ENCODE measurements at regions of chr17 and their contacts with region 1.

Region 1: DNA sequence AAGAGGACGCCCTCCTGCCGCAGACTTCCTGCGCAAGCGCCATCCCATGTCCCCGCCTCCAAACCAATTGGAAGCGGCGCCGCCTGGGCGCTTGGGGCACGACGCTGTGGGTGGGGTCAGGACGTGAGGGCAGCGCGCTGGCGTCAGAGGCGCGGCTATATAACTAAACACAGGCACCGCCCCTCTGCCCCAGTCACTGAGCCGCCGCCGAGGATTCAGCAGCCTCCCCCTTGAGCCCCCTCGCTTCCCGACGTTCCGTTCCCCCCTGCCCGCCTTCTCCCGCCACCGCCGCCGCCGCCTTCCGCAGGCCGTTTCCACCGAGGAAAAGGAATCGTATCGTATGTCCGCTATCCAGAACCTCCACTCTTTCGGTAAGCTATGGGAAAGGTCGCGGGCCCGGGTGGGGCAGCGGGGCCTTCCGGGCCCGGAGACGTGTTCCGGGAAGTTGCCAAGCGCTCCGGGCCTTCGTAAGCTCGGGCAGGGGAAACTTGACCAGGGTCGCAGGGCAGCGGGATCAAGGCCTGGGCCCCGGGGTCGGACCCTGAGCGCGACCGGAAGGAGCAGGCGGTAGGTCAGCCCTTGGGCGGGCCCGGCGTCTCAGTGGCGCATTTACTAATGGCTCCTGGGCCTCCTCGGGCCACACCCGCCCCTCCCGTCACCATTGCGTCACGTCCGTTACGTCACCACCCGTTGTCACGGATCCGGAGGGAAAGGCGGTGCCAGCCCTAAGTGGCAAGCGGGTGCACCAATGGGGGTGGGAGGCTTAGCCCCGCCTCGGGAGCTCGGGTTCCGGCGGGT is at the start of gene EIF1:
- DNase-seq: peak; percentile 100
- ATAC-seq: peak; percentile 85 to 87
- H3K4me3 ChIP-seq: peak within 1 kb of the TSS; percentile 94 to 100 (median 96)
- H3K27ac ChIP-seq: peak within 1 kb of the TSS; percentile 99 to 100 (median 100)
- H3K4me1 ChIP-seq: peaks cover 28 to 30% of the 10 kb centered on the region in 2 donors
- H3K27me3 ChIP-seq: no peaks in the 10 kb centered on the region
- CTCF ChIP-seq: no peak
- POLR2A ChIP-seq: peak; percentile 100
- total RNA-seq, gene EIF1: 222 to 842 (median 375) TPM

Region 2: DNA sequence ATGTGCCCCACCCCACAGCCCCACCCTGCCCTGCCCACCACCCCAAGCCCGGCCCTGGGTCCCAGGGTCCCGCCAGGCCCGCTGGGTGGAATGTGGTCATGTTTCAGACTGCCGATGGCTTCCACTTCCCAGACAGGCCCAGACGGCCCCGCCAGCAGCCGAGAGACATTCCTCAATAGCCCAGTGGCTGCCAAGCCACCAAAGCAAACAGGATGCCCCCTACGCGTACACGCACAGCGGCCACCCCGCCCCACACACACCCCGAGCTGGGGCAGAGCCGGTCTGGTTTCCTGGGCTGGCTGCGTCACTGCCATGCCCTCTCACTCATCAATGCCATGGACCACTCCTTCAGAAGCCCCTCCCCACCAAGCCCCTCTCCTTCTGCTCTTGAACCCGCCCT is 63.3 kb before region 1 on chr17:
- in situ Hi-C with region 1: no loop called
- intact Hi-C with region 1: no loop called
- DNase-seq: no peak
- ATAC-seq: no peak
- H3K4me3 ChIP-seq: no peak overlapping the region
- H3K27ac ChIP-seq: no peak overlapping the region
- H3K4me1 ChIP-seq: no peaks in the 10 kb centered on the region
- H3K27me3 ChIP-seq: no peaks in the 10 kb centered on the region
- CTCF ChIP-seq: no peak
- POLR2A ChIP-seq: no peak

Region 3: GRCh38 chr17:41786227-41787020 is 97.5 kb after region 1 on chr17 and contains the start of gene JUP:
- in situ Hi-C with region 1: no loop called
- intact Hi-C with region 1: loop called (anchors 2 kb)
- DNase-seq: peak; percentile 99 to 100
- ATAC-seq: peak; percentile 86 to 88
- H3K4me3 ChIP-seq: peak within 1 kb of the TSS; percentile 72 to 83 (median 78)
- H3K27ac ChIP-seq: peak within 1 kb of the TSS; percentile 81 to 95 (median 92)
- H3K4me1 ChIP-seq: peaks cover 41 to 47% of the 10 kb centered on the region in 2 donors
- H3K27me3 ChIP-seq: no peaks in the 10 kb centered on the region
- CTCF ChIP-seq: peak; percentile 65 to 96 (median 94)
- POLR2A ChIP-seq: peak; percentile 99
- total RNA-seq, gene JUP: 88.8 to 135 (median 113) TPM

Measured in gastrocnemius medialis (tissue), 4 donors.